ENCODE measurements at regions of chr12 and their contacts with region 1.

Region 1: DNA sequence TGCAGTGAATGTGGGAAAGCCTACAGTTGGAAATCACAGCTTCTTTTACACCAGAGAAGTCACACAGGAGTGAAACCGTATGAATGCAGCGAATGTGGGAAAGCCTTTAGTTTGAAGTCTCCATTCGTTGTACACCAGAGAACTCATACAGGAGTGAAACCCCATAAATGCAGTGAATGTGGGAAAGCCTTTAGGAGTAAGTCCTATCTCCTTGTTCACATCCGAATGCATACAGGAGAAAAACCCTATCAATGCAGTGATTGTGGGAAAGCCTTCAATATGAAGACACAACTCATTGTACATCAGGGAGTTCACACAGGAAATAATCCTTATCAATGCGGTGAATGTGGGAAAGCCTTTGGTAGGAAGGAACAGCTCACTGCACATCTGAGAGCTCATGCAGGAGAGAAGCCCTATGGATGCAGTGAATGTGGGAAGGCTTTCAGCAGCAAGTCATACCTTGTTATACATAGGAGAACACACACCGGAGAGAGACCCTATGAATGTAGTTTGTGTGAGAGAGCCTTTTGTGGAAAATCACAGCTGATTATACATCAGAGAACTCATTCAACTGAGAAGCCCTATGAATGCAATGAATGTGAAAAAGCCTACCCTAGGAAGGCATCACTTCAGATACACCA is 24.6 kb downstream of the ZNF26 start:
- DNase-seq: no peak
- ATAC-seq: no peak
- H3K4me3 ChIP-seq: no peak overlapping the region
- H3K27ac ChIP-seq: no peak overlapping the region
- H3K4me1 ChIP-seq: no peaks in the 10 kb centered on the region
- H3K27me3 ChIP-seq: no peaks in the 10 kb centered on the region
- CTCF ChIP-seq: no peak
- POLR2A ChIP-seq: no peak

Region 2: GRCh38 chr12:132887513-132888351 is 123.0 kb before region 1 on chr12 and contains the start of gene CHFR:
- intact Hi-C with region 1: no loop called
- DNase-seq: peak; percentile 95 to 98 (median 97)
- ATAC-seq: peak; percentile 99
- H3K4me3 ChIP-seq: peak within 1 kb of the TSS; percentile 88 to 99
- H3K27ac ChIP-seq: peak within 1 kb of the TSS; percentile 86 to 96 (median 94)
- H3K4me1 ChIP-seq: peaks cover 8% of the 10 kb centered on the region
- H3K27me3 ChIP-seq: no peaks in the 10 kb centered on the region
- CTCF ChIP-seq: no peak
- POLR2A ChIP-seq: peak; percentile 58 to 91 (median 79)
- total RNA-seq, gene CHFR: 31.4 to 45.2 TPM

Region 3: GRCh38 chr12:133058203-133059125 is 47.7 kb after region 1 on chr12:
- intact Hi-C with region 1: loop called (anchors 10 kb)
- DNase-seq: no peak
- ATAC-seq: no peak
- H3K4me3 ChIP-seq: no peak overlapping the region
- H3K27ac ChIP-seq: no peak overlapping the region
- H3K4me1 ChIP-seq: no peaks in the 10 kb centered on the region
- H3K27me3 ChIP-seq: no peaks in the 10 kb centered on the region
- CTCF ChIP-seq: no peak
- POLR2A ChIP-seq: no peak

Measured in body of pancreas (tissue), 4 donors.